PC-3 (cell line): ENCODE measurements at regions of chr17 and their contacts with region 1.

Region 1: GRCh38 chr17:34163646-34164045 is 91.4 kb upstream of the CCL2 start:
- DNase-seq: no peak
- ATAC-seq: peak; percentile 59
- H3K4me3 ChIP-seq: no peak overlapping the region
- H3K27ac ChIP-seq: no peak overlapping the region
- H3K4me1 ChIP-seq: no peaks in the 10 kb centered on the region
- H3K27me3 ChIP-seq: no peaks in the 10 kb centered on the region
- CTCF ChIP-seq: 0 out of 2 replicates have a peak, but pooled peaks have one; percentile 17

Region 2: DNA sequence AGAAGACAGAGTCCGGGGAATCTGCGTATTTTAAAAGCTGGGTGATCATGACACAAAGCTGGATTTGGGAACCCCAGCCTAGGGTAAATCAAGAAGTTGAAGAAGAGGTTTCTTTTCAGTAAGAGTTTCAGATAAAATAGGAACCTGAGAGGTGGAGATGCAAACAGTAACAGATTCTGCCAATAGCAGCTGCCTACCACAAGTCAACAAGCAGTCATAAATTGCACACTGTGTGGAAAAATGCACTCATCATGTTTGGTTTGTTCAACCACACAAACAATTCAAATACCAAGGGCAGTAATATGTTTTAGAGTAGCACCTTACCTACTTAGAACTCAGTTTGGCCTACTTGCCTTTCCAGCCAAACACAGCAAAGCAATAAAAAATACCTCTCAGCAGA is 1300.7 kb before region 1 on chr17:
- CTCF ChIA-PET with region 1: no interaction called
- POLR2A ChIA-PET with region 1: interaction called, 12 read pairs
- intact Hi-C with region 1: no loop called
- DNase-seq: peak; percentile 19
- ATAC-seq: no peak
- H3K4me3 ChIP-seq: no peak overlapping the region
- H3K27ac ChIP-seq: no peak overlapping the region
- H3K4me1 ChIP-seq: no peaks in the 10 kb centered on the region; the same call in 1 of the 2 replicates
- H3K27me3 ChIP-seq: no peaks in the 10 kb centered on the region
- CTCF ChIP-seq: no peak

Region 3: GRCh38 chr17:34269969-34270368 is 106.3 kb after region 1 on chr17 and contains the start of gene CCL7:
- CTCF ChIA-PET with region 1: no interaction called
- POLR2A ChIA-PET with region 1: no interaction called
- intact Hi-C with region 1: no loop called
- DNase-seq: no peak
- ATAC-seq: no peak
- H3K4me3 ChIP-seq: no peak within 1 kb of the TSS
- H3K27ac ChIP-seq: no peak within 1 kb of the TSS
- H3K4me1 ChIP-seq: no peaks in the 10 kb centered on the region
- H3K27me3 ChIP-seq: no peaks in the 10 kb centered on the region
- CTCF ChIP-seq: no peak
- total RNA-seq, gene CCL7: not detected in 2 replicates